HAP-1 (cell line): ENCODE measurements at regions of chr9 and their contacts with region 1.

Region 1: GRCh38 chr9:68584189-68585033 is 43.7 kb upstream of the TMEM252 start:
- DNase-seq: peak; percentile 73 to 91
- H3K4me3 ChIP-seq: no peak overlapping the region
- H3K4me1 ChIP-seq: no peaks in the 10 kb centered on the region
- H3K27me3 ChIP-seq: no peaks in the 10 kb centered on the region

Region 2: GRCh38 chr9:68637020-68637419 is 52.6 kb after region 1 on chr9:
- in situ Hi-C with region 1: no loop called
- DNase-seq: no peak
- H3K4me3 ChIP-seq: no peak overlapping the region
- H3K4me1 ChIP-seq: no peaks in the 10 kb centered on the region
- H3K27me3 ChIP-seq: 0 out of 2 replicates have a peak, but pooled peaks cover 2% of the 10 kb centered on the region

Region 3: GRCh38 chr9:68654075-68654474 is 69.7 kb after region 1 on chr9:
- in situ Hi-C with region 1: no loop called
- DNase-seq: no peak
- H3K4me3 ChIP-seq: no peak overlapping the region
- H3K4me1 ChIP-seq: no peaks in the 10 kb centered on the region
- H3K27me3 ChIP-seq: peaks cover 4% of the 10 kb centered on the region

Region 4: DNA sequence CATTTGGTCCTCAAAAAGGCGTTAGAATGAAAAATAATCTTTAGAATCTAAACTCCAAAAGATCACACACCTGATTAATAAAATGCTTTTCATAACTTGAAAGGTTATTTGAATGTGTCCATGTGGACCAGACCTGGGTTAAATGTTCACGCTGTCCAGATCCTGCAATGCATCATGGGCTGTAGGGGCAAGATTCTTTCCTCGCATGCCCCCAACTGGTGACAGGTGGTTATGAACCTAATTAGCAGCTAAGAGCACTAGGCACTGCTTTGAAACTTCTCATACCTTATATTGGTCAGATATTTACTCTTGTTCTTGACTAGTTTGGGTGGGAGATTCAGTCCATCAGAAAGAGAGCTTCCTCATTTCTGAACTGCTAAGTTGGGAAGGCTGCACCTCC is 101.4 kb after region 1 on chr9:
- in situ Hi-C with region 1: loop called (anchors 25 kb)
- DNase-seq: peak; percentile 6 to 63
- H3K4me3 ChIP-seq: no peak overlapping the region
- H3K4me1 ChIP-seq: no peaks in the 10 kb centered on the region
- H3K27me3 ChIP-seq: peaks cover 19% of the 10 kb centered on the region

Region 5: DNA sequence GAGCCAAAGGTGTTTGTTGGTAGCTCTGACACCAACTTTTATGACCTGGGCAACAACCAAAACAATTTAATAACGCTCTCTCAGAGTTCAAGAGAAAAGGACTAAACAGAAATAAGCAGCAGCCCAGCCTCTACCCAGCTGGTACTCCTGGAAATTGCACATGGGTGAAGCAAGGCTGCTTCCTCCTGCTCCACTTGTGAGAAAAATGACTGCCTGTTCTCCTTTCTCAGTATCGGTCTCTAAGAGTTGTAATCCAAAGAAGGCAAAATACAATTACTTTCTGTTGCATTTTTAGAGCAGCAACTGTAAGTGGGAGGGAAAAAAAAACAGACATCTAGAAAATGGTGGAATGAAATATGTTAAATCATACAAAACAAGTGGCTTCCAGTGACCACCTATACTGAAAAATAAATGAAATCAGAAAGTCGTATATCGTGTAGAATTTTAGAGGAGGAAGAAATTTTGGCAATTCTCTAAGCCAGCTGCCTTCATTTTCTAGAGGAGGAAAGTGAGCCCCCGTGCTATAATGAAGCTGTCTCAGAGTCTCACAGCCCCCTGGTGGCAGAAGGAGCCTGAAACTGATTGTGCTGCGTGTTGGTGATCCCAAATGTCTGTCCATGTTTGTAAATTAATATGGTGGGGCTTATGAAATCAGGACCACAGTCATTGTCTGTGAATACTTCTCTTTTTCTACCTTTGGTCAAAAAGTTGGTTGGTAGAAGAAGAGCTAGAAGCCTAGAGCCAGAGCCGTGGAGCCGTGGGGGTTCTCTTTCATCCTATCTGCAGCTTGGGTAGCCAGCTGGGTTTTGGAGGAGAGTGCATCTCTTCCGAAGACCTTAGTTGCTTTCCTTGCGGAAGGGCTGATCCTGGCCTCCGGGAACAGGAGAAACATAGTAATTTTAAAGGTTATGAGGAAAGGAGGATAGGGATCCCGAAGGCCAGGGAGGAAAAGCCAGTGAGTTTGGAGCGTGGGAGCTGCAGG is 260.5 kb after region 1 on chr9:
- in situ Hi-C with region 1: loop called (anchors 25 kb)
- DNase-seq: peak; percentile 23 to 74
- H3K4me3 ChIP-seq: no peak overlapping the region
- H3K4me1 ChIP-seq: no peaks in the 10 kb centered on the region
- H3K27me3 ChIP-seq: no peaks in the 10 kb centered on the region; the same call in 1 of the 2 replicates

Region 6: DNA sequence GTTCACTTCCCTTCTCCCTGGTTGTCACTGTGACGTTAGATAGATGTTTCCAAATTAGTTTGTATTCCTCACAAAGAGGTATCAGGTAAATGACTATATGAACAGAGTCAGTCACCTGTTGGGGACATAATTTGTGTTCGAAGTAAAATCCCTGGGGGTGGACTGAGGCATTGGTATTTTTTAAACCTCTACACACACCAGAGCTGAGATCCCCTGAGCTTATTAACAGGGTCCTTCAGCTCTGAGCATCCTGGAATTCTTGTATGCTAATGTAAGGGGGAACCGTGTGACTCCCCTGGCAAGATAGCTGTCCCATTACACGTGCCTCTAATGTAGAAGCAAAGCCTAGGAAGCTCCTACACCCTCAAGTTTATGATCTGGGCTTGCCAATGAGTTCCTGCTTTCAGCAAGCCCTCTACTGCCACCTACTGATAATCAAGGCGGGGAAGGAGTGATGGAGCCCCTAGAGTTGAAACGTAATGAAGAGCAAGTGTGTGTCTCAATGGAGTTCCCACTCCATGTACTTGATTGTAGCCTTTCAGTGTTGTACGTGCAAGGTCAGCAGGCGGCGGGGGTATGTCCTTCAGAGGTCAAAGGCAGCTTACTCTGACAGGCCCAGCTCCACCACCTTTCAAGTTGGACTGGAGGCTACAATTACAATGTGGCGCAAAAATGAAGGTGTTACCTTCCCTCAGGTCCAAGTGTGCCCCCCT is 415.1 kb after region 1 on chr9:
- in situ Hi-C with region 1: loop called (anchors 5 kb)
- DNase-seq: peak; percentile 76 to 78
- H3K4me3 ChIP-seq: no peak overlapping the region
- H3K4me1 ChIP-seq: peaks cover 6% of the 10 kb centered on the region
- H3K27me3 ChIP-seq: peaks cover 18% of the 10 kb centered on the region

Region 7: DNA sequence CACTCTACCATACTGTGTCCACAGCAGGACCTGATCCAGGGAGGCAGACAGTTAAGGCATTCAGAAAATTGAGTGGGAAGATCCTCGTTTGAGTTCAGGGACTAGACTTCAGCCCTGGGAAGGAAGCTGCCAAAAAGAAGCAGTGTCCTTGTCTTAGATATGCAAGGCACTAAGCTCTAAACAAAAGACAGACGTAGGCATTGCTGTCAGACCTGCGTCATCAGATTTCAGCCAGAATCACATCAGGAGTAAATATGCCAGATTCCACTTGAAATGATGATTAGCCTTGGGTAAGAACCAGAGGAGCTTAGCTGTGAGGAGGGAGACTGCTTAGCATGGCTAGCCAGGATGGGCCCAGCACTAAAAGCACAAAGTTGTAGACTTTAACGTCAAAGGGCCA is 1516.0 kb after region 1 on chr9:
- in situ Hi-C with region 1: no loop called
- DNase-seq: peak in 1 of 2 experiments; percentile 16
- H3K4me3 ChIP-seq: no peak overlapping the region
- H3K4me1 ChIP-seq: no peaks in the 10 kb centered on the region
- H3K27me3 ChIP-seq: no peaks in the 10 kb centered on the region